CD8-positive, alpha-beta T cell (primary cell): ENCODE measurements at regions of chr7 and their contacts with region 1.

Region 1: DNA sequence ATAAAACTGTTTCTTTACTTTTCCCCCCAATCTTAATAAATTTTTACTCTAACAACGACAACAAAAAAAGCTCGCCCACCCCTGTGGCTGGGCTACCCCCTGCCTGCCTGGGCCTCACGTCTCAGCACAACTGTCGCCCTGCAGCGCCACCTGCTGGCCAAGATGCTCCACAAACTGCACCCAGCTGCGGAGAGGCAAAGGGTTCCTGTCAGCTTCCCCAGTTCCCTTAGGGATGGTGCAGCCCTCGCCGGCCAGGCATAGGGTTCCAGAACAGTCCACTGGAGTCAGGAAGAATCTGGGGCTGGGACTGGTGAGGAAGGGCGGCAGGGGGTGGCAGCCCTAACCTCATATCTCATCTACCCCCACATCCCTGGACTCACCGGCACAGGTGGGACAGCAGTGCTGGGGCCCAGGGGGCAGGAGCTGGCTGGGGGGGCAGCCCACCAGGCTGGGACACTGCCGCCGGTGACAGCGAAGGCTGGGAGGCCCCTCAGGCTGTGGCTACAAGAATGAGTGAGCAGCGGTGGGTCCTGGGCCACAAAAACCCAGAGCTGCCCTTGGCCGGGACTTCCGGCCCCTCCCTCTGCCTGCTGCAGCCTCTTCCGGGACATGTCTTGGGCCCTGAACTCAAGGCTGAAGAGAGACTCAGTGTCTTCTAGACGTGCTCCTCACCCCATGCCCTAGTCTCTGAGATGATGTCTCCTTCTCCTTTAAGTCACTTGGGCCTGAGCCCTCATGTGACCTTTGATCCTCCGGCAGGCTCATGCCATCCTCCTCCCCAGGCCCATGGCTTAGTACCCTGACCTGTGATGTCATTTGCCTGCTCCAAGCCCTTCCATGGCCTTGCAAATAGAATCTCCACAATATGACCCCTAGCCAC is 21.2 kb downstream of the ATP6V1F start:
- DNase-seq: peak; percentile 71 to 94 (median 87)
- ATAC-seq: peak; percentile 92
- H3K4me3 ChIP-seq: peak overlapping the region in 1 of 2 experiments; percentile 48
- H3K4me3 Mint-ChIP-seq: peak overlapping the region; percentile 58
- H3K27ac ChIP-seq: no peak overlapping the region
- H3K27ac Mint-ChIP-seq: no peak overlapping the region
- H3K4me1 ChIP-seq: no peaks in the 10 kb centered on the region
- H3K4me1 Mint-ChIP-seq: no peaks in the 10 kb centered on the region
- H3K27me3 ChIP-seq: peaks cover 0 to 16% of the 10 kb centered on the region in 2 experiments
- H3K27me3 Mint-ChIP-seq: peaks cover 14% of the 10 kb centered on the region
- CTCF ChIP-seq: peak; percentile 98

Region 2: GRCh38 chr7:128791121-128791961 is 92.5 kb before region 1 on chr7:
- CTCF ChIA-PET with region 1: interaction called, 30 read pairs
- POLR2A ChIA-PET with region 1: interaction called, 6 read pairs
- intact Hi-C with region 1: loop called in 1 of 2 experiments (anchors 1 kb)
- DNase-seq: peak; percentile 40 to 89 (median 79)
- ATAC-seq: peak; percentile 95
- H3K4me3 ChIP-seq: peak overlapping the region; percentile 71 to 89
- H3K4me3 Mint-ChIP-seq: peak overlapping the region; percentile 84
- H3K27ac ChIP-seq: peak overlapping the region in 1 of 2 experiments; percentile 19
- H3K27ac Mint-ChIP-seq: no peak overlapping the region
- H3K4me1 ChIP-seq: peaks cover 9% of the 10 kb centered on the region
- H3K4me1 Mint-ChIP-seq: peaks cover 20% of the 10 kb centered on the region
- H3K27me3 ChIP-seq: no peaks in the 10 kb centered on the region
- H3K27me3 Mint-ChIP-seq: no peaks in the 10 kb centered on the region
- CTCF ChIP-seq: no peak

Region 3: GRCh38 chr7:128833148-128833945 is 50.5 kb before region 1 on chr7:
- CTCF ChIA-PET with region 1: interaction called, 17 read pairs
- POLR2A ChIA-PET with region 1: no interaction called
- intact Hi-C with region 1: no loop called
- DNase-seq: no peak
- ATAC-seq: no peak
- H3K4me3 ChIP-seq: no peak overlapping the region
- H3K4me3 Mint-ChIP-seq: no peak overlapping the region
- H3K27ac ChIP-seq: no peak overlapping the region
- H3K27ac Mint-ChIP-seq: no peak overlapping the region
- H3K4me1 ChIP-seq: peaks cover 19% of the 10 kb centered on the region
- H3K4me1 Mint-ChIP-seq: peaks cover 20% of the 10 kb centered on the region
- H3K27me3 ChIP-seq: peaks cover 14 to 24% of the 10 kb centered on the region in 2 experiments
- H3K27me3 Mint-ChIP-seq: peaks cover 20% of the 10 kb centered on the region
- CTCF ChIP-seq: no peak

Region 4: DNA sequence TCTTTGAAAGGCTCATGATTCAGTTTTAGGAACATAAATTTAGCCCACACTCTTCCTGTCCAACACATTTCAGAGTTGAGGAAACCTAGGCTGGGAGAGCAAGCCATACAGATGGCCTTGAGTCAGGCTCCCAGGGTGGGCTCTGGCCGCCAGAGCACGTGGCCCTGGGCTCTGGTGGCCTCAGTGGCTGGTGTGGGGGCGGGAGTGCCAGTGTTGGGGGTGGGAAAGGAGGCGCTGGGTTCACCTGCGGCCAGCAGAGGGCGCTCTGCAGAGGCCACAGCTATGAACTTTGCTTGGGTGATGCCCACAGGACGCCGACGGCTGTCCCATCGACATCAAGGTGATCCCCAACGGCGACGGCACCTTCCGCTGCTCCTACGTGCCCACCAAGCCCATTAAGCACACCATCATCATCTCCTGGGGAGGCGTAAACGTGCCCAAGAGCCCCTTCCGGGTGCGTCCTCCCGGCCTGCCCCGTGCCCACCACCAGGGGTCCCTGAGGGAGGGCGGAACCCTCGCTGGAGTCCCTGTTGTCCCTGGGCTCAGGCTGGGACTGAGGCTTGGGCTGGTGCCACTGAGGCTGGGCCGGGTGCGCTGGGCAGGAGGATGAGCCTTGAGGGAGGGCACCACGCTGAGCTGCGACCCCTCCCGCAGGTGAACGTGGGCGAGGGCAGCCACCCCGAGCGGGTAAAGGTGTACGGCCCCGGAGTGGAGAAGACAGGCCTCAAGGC is 41.8 kb before region 1 on chr7:
- CTCF ChIA-PET with region 1: interaction called, 26 read pairs
- POLR2A ChIA-PET with region 1: no interaction called
- intact Hi-C with region 1: loop called (anchors 1 kb)
- DNase-seq: peak in 8 of 9 experiments; percentile 25 to 71 (median 58)
- ATAC-seq: peak; percentile 68
- H3K4me3 ChIP-seq: no peak overlapping the region
- H3K4me3 Mint-ChIP-seq: no peak overlapping the region
- H3K27ac ChIP-seq: no peak overlapping the region
- H3K27ac Mint-ChIP-seq: no peak overlapping the region
- H3K4me1 ChIP-seq: no peaks in the 10 kb centered on the region
- H3K4me1 Mint-ChIP-seq: no peaks in the 10 kb centered on the region
- H3K27me3 ChIP-seq: no peaks in the 10 kb centered on the region
- H3K27me3 Mint-ChIP-seq: no peaks in the 10 kb centered on the region
- CTCF ChIP-seq: peak; percentile 72

Region 5: DNA sequence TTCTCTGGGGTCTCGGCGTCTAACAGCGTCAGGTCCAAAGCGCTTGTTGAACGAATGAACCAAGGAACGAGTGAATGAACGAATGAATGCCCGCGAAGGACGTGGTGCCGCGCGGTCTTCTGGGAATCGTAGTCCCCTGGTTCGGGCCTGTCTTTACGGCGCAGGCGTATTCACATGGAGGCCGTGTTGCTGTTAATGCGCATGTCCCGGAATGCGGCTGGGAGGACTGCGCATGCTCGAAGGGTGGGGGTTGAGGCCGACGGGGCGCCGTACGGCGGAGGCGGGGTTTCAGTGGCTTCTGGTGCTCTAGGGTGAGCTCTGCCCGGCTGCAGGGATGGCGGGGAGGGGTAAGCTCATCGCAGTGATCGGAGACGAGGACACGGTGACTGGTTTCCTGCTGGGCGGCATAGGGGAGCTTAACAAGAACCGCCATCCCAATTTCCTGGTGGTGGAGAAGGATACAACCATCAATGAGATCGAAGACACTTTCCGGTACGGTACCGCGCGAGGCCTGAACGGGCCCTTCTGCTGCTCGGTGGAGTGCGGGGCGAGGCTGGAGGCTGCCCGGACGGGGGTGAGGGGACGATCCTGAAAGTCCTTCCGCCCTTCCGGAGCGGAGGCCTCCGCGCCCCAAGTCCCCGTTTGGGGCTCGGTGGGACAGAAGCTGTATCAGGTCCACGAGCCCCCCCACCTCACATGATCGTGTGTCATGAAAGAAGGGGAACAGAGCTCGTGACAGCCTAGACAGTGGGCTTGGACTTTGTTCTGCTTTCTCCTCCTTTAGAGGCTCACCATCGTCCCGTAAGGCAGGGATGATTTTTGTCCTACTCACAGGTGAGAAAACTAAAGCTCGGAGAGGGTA is 21.1 kb before region 1 on chr7 and contains the start of gene ATP6V1F:
- CTCF ChIA-PET with region 1: interaction called, 23 read pairs
- POLR2A ChIA-PET with region 1: no interaction called
- intact Hi-C with region 1: loop called (anchors 1 to 2 kb)
- DNase-seq: peak; percentile 97 to 100 (median 99)
- ATAC-seq: peak; percentile 87
- H3K4me3 ChIP-seq: peak within 1 kb of the TSS; percentile 80 to 92
- H3K4me3 Mint-ChIP-seq: peak within 1 kb of the TSS; percentile 96
- H3K27ac ChIP-seq: peak within 1 kb of the TSS; percentile 71 to 74
- H3K27ac Mint-ChIP-seq: peak within 1 kb of the TSS; percentile 94
- H3K4me1 ChIP-seq: peaks cover 17% of the 10 kb centered on the region
- H3K4me1 Mint-ChIP-seq: peaks cover 34% of the 10 kb centered on the region
- H3K27me3 ChIP-seq: no peaks in the 10 kb centered on the region
- H3K27me3 Mint-ChIP-seq: no peaks in the 10 kb centered on the region
- CTCF ChIP-seq: no peak
- total RNA-seq, gene ATP6V1F: 54.8 to 59.3 TPM

Region 6: GRCh38 chr7:128869138-128869943 is 14.5 kb before region 1 on chr7:
- CTCF ChIA-PET with region 1: interaction called, 23 read pairs
- POLR2A ChIA-PET with region 1: no interaction called
- intact Hi-C with region 1: no loop called
- DNase-seq: peak in 7 of 9 experiments; percentile 11 to 72 (median 56)
- ATAC-seq: peak; percentile 77
- H3K4me3 ChIP-seq: peak overlapping the region; percentile 48 to 60
- H3K4me3 Mint-ChIP-seq: peak overlapping the region; percentile 76
- H3K27ac ChIP-seq: no peak overlapping the region
- H3K27ac Mint-ChIP-seq: no peak overlapping the region
- H3K4me1 ChIP-seq: peaks cover 8% of the 10 kb centered on the region
- H3K4me1 Mint-ChIP-seq: peaks cover 33% of the 10 kb centered on the region
- H3K27me3 ChIP-seq: no peaks in the 10 kb centered on the region
- H3K27me3 Mint-ChIP-seq: no peaks in the 10 kb centered on the region
- CTCF ChIP-seq: peak; percentile 13